Head of caudate nucleus (tissue), 42 donors: ENCODE measurements at regions of chr17 and their contacts with region 1.

Region 1: GRCh38 chr17:8156246-8156992 is 4.2 kb upstream of the PER1 start:
- DNase-seq: peak; percentile 98 to 100 (median 99)

Region 2: DNA sequence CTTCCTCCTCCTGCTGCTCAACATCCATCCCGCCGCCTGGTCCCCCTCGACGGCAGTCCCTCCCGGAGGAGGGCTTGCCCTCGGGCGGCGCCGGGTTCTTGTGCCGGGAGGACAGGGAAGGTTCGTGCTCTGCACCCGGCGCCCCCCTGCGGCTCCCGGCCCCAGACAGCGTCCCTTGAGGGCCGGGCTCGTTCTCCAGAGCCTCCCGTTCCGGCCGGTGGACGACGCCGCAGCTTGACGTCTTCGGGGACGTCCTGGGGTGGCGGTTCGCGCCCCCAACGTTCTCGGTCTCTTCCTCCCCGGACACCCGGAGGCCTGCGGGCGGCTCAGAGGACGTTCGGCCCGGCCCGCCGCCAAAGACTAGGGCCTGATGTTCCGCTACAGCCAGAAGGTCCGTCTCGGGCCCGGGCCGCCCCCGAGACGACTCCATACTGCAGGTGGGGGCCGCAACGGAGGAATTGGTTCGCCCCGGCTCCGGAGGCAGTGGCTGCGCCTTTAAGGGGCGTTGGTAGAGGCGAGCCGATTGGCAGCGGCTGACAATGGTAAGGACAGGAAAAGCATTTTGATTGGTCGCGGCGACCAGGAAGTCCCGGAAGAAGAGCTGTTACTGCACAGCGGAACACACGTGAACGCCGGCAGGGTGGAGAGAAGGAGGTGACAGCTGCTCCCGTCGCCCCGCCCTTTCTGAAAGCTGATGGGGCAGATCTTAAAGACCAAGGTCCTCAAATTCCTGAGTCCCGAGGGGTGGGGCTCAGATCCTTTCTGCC is 33.5 kb after region 1 on chr17 and contains the start of gene BORCS6:
- intact Hi-C with region 1: loop called (anchors 2 kb)
- DNase-seq: peak; percentile 98 to 100 (median 99)